Caco-2 (cell line): ENCODE measurements at regions of chr4 and their contacts with region 1.

Region 1: GRCh38 chr4:52983563-52984303 is 121.6 kb downstream of the RASL11B start:
- DNase-seq: peak in 1 of 2 experiments; percentile 64
- H3K4me3 ChIP-seq: no peak overlapping the region
- H3K4me3 Mint-ChIP-seq: no peak overlapping the region
- H3K27ac Mint-ChIP-seq: no peak overlapping the region
- H3K4me1 ChIP-seq: peaks cover 7% of the 10 kb centered on the region
- H3K4me1 Mint-ChIP-seq: no peaks in the 10 kb centered on the region
- H3K27me3 ChIP-seq: no peaks in the 10 kb centered on the region
- H3K27me3 Mint-ChIP-seq: no peaks in the 10 kb centered on the region
- CTCF ChIP-seq: peak; percentile 58 to 66

Region 2: DNA sequence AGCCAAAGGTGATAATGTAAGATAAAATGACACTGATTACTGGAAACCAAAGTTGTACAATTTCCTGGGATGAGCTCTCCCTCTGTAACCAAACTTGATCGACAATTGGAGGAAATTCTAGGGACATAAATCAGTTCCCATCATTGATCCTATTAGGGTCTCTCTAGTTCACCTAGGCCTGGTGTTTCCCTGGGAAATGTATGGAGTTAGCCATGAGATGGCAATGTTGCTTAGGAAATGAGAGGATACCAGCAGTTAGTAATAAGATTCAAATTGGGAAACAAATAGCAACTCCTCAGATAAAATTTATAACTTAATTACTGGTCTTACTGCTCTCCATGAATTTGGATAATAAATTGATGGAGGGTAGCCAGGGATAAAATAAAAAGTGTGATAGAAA is 880.4 kb before region 1 on chr4:
- CTCF ChIA-PET with region 1: no interaction called
- POLR2A ChIA-PET with region 1: no interaction called
- intact Hi-C with region 1: loop called (anchors 5 kb)
- DNase-seq: no peak
- H3K4me3 ChIP-seq: no peak overlapping the region
- H3K4me3 Mint-ChIP-seq: no peak overlapping the region
- H3K27ac Mint-ChIP-seq: no peak overlapping the region
- H3K4me1 ChIP-seq: no peaks in the 10 kb centered on the region
- H3K4me1 Mint-ChIP-seq: no peaks in the 10 kb centered on the region
- H3K27me3 ChIP-seq: no peaks in the 10 kb centered on the region
- H3K27me3 Mint-ChIP-seq: no peaks in the 10 kb centered on the region
- CTCF ChIP-seq: peak in 1 of 2 experiments; percentile 20

Region 3: DNA sequence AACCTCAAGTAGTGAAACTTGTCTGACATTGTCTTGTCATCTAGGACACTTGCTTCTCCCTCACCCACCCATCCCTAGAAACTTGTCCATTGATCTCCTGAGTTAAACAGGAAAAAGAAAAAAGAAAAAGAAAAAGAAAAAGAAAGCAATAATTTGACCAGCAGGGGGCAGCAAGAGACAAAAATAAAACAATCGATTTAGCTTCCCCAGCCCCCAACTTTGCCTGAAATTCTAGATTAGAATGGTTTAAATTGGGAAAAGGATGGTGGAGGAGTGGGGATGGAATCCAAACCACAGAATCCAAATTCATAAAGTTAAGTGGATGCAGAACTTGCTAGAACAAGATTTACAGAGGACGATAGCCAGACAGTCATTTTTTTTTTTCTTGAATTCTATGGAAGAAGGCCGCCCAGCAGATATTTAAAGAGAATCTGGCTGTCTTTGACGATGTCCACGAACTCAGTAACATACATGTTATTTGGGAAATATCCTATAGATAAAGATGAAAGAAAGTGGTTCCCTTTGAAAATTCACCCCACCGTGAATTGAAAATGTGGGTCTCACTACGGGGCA is 607.5 kb before region 1 on chr4:
- CTCF ChIA-PET with region 1: interaction called, 8 read pairs
- POLR2A ChIA-PET with region 1: no interaction called
- intact Hi-C with region 1: loop called (anchors 1 kb)
- DNase-seq: peak in 1 of 2 experiments; percentile 53
- H3K4me3 ChIP-seq: no peak overlapping the region
- H3K4me3 Mint-ChIP-seq: no peak overlapping the region
- H3K27ac Mint-ChIP-seq: no peak overlapping the region
- H3K4me1 ChIP-seq: no peaks in the 10 kb centered on the region
- H3K4me1 Mint-ChIP-seq: no peaks in the 10 kb centered on the region
- H3K27me3 ChIP-seq: no peaks in the 10 kb centered on the region
- H3K27me3 Mint-ChIP-seq: peaks cover 21% of the 10 kb centered on the region
- CTCF ChIP-seq: peak; percentile 42 to 61

Region 4: DNA sequence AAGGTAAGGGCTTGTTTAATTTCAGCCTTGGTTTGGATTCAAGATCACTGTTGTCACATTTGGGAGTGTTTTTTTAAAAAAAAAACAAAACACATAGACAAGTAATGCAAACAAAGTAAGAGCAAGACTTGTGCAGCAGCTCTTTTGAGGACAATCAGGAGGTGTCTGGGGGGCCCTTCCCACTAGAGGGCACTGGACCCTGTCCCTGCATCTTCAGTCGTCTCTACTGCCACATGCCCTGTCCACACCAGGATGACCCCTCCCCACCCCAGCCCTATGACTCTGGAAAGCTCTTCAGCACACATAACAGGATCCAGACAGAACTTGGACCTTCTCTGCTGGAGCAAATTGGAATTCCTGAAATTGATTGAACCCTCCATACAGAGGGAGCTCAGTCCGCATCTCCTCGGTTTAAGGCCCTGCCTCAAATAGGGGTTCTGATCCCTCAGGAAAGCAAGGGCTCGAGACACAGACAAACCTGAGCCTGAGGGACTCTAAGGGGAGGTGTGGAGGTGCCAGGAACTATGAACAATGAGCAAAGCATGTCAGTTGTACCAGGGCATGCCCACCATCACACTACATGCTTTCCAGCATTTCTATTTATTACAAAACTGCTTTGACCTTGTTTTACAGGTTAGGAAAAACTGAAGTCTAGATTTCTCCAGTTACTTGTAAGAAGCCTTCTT is 395.5 kb before region 1 on chr4:
- CTCF ChIA-PET with region 1: interaction called, 8 read pairs
- POLR2A ChIA-PET with region 1: no interaction called
- intact Hi-C with region 1: loop called (anchors 1 kb)
- DNase-seq: peak; percentile 51 to 60
- H3K4me3 ChIP-seq: no peak overlapping the region
- H3K4me3 Mint-ChIP-seq: no peak overlapping the region
- H3K27ac Mint-ChIP-seq: no peak overlapping the region
- H3K4me1 ChIP-seq: peaks cover 6% of the 10 kb centered on the region; the same call in 1 of the 2 replicates
- H3K4me1 Mint-ChIP-seq: peaks cover 15% of the 10 kb centered on the region
- H3K27me3 ChIP-seq: no peaks in the 10 kb centered on the region
- H3K27me3 Mint-ChIP-seq: no peaks in the 10 kb centered on the region
- CTCF ChIP-seq: peak; percentile 49 to 64

Region 5: GRCh38 chr4:52712172-52712990 is 271.4 kb before region 1 on chr4:
- CTCF ChIA-PET with region 1: interaction called, 3 read pairs
- POLR2A ChIA-PET with region 1: no interaction called
- intact Hi-C with region 1: loop called (anchors 2 kb)
- DNase-seq: peak; percentile 98 to 99
- H3K4me3 ChIP-seq: peak overlapping the region; percentile 73
- H3K4me3 Mint-ChIP-seq: peak overlapping the region; percentile 88
- H3K27ac Mint-ChIP-seq: peak overlapping the region; percentile 93
- H3K4me1 ChIP-seq: peaks cover 11% of the 10 kb centered on the region
- H3K4me1 Mint-ChIP-seq: peaks cover 12% of the 10 kb centered on the region
- H3K27me3 ChIP-seq: no peaks in the 10 kb centered on the region
- H3K27me3 Mint-ChIP-seq: peaks cover 3% of the 10 kb centered on the region
- CTCF ChIP-seq: no peak

Region 6: GRCh38 chr4:52750819-52751486 is 232.8 kb before region 1 on chr4 and contains the start of gene ERVMER34-1:
- CTCF ChIA-PET with region 1: interaction called, 4 read pairs
- POLR2A ChIA-PET with region 1: no interaction called
- intact Hi-C with region 1: loop called (anchors 5 kb)
- DNase-seq: peak in 1 of 2 experiments; percentile 53
- H3K4me3 ChIP-seq: peak within 1 kb of the TSS; percentile 77
- H3K4me3 Mint-ChIP-seq: peak within 1 kb of the TSS; percentile 98
- H3K27ac Mint-ChIP-seq: peak within 1 kb of the TSS; percentile 91
- H3K4me1 ChIP-seq: peaks cover 8% of the 10 kb centered on the region; the same call in 1 of the 2 replicates
- H3K4me1 Mint-ChIP-seq: peaks cover 10% of the 10 kb centered on the region
- H3K27me3 ChIP-seq: no peaks in the 10 kb centered on the region
- H3K27me3 Mint-ChIP-seq: no peaks in the 10 kb centered on the region
- CTCF ChIP-seq: no peak
- total RNA-seq, gene ERVMER34-1: 73.3 and 85.6 TPM in 2 replicates

Region 7: DNA sequence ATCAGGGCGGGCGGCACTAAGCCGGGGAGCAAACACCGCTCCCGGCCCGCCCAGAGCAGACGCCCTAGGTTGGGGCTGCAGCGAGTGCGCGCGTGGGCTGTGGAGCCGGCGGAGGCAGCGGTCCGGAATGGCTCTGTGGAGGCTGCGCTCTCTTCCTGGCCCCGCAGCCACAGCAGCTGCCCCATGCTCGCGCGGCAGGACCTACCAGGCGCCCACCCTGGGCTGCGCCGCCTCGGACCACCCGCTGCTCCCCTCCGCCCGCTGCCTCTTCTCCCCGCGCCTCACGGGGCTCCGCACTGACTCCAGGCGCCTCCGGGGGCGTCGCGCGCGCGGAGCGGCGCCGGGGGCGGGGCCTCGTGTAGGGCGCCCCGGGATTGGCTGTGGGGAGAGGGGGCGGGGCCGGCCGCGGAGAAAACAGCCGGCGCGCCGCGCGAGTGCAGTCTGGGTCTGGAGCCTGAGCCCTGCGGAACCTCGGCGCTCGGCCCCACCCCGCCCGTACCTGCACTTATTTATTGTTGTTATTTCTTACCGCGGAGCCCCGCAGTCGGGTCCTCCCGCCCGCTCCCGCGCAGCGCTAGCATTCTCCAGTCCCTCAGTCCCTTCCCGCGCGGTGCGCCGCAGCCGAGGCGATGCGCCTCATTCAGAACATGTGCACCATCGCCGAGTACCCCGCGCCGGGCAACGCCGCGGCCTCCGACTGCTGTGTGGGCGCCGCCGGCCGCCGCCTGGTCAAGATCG is 121.7 kb before region 1 on chr4 and contains the start of gene RASL11B:
- CTCF ChIA-PET with region 1: no interaction called
- POLR2A ChIA-PET with region 1: no interaction called
- intact Hi-C with region 1: loop called (anchors 2 kb)
- DNase-seq: peak; percentile 78 to 93
- H3K4me3 ChIP-seq: peak within 1 kb of the TSS; percentile 95
- H3K4me3 Mint-ChIP-seq: peak within 1 kb of the TSS; percentile 86
- H3K27ac Mint-ChIP-seq: peak within 1 kb of the TSS; percentile 70
- H3K4me1 ChIP-seq: peaks cover 20% of the 10 kb centered on the region
- H3K4me1 Mint-ChIP-seq: no peaks in the 10 kb centered on the region
- H3K27me3 ChIP-seq: no peaks in the 10 kb centered on the region
- H3K27me3 Mint-ChIP-seq: no peaks in the 10 kb centered on the region
- CTCF ChIP-seq: peak in 1 of 2 experiments; percentile 21
- total RNA-seq, gene RASL11B: 19.6 and 23.3 TPM in 2 replicates